ENCODE measurements at regions of chr6 and their contacts with region 1.

Region 1: DNA sequence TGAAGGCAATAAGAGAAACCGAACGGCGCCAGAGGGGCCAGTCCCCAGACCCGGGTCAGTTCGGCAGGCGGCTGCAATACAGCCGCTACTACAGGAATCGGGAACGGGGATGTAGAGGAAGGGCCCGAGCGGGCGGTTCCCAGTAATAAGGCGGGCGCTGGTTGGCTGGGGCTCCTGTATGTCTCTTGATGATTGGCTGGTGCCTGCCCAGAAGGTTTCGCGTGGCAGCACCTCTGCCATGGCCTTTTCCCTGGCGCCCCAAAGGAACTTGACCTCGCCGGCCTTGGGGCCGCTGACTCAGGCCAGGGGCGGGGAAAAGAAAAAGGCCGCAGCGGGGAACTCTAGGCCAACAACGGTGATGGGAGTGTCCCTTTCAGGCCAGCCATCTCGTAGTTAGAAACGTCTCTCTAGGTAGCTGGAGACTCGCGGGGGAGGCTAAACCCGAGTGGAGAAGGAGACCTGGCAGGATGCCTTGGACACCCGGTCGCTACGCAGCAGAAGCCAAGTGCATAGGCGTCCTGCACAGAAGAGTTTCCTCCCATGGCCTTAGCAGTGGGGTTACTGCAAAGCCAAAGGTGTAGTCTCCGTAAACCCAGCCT is at the start of gene IBTK:
- DNase-seq: peak; percentile 88
- ATAC-seq: peak; percentile 70
- H3K4me3 ChIP-seq: peak within 1 kb of the TSS; percentile 84
- H3K27ac ChIP-seq: peak within 1 kb of the TSS; percentile 100
- H3K4me1 ChIP-seq: peaks cover 38% of the 10 kb centered on the region
- H3K27me3 ChIP-seq: no peaks in the 10 kb centered on the region
- CTCF ChIP-seq: no peak
- total RNA-seq, gene IBTK: 17.2 and 20.0 TPM in 2 replicates

Region 2: DNA sequence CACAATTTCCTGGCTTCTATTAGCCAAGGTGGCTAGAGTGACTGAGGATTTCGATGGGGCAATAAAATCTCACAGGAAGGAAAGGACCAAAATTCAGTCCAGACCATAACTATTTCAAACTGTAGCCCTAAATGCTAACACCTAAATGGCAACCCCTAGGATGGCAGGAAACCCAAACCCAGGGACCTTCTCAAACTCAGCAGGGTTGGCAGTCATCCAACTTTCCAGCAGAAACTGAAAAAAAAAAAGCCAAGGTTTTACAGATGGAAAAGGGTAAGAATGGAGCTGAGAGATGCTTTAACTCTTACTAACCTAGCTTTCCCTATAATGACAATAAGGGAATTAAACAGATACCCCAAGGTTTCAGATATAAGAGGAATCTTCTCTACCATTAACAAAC is 10.7 kb before region 1 on chr6:
- CTCF ChIA-PET with region 1: no interaction called
- POLR2A ChIA-PET with region 1: interaction called, 10 read pairs
- intact Hi-C with region 1: no loop called
- DNase-seq: no peak
- ATAC-seq: no peak
- H3K4me3 ChIP-seq: no peak overlapping the region
- H3K27ac ChIP-seq: no peak overlapping the region
- H3K4me1 ChIP-seq: no peaks in the 10 kb centered on the region
- H3K27me3 ChIP-seq: no peaks in the 10 kb centered on the region
- CTCF ChIP-seq: no peak

Region 3: GRCh38 chr6:82541306-82541705 is 293.6 kb after region 1 on chr6:
- CTCF ChIA-PET with region 1: no interaction called
- POLR2A ChIA-PET with region 1: no interaction called
- intact Hi-C with region 1: loop called (anchors 5 kb)
- DNase-seq: no peak
- ATAC-seq: no peak
- H3K4me3 ChIP-seq: no peak overlapping the region
- H3K27ac ChIP-seq: no peak overlapping the region
- H3K4me1 ChIP-seq: 0 out of 2 replicates have a peak, but pooled peaks cover 5% of the 10 kb centered on the region
- H3K27me3 ChIP-seq: no peaks in the 10 kb centered on the region
- CTCF ChIP-seq: no peak

Region 4: DNA sequence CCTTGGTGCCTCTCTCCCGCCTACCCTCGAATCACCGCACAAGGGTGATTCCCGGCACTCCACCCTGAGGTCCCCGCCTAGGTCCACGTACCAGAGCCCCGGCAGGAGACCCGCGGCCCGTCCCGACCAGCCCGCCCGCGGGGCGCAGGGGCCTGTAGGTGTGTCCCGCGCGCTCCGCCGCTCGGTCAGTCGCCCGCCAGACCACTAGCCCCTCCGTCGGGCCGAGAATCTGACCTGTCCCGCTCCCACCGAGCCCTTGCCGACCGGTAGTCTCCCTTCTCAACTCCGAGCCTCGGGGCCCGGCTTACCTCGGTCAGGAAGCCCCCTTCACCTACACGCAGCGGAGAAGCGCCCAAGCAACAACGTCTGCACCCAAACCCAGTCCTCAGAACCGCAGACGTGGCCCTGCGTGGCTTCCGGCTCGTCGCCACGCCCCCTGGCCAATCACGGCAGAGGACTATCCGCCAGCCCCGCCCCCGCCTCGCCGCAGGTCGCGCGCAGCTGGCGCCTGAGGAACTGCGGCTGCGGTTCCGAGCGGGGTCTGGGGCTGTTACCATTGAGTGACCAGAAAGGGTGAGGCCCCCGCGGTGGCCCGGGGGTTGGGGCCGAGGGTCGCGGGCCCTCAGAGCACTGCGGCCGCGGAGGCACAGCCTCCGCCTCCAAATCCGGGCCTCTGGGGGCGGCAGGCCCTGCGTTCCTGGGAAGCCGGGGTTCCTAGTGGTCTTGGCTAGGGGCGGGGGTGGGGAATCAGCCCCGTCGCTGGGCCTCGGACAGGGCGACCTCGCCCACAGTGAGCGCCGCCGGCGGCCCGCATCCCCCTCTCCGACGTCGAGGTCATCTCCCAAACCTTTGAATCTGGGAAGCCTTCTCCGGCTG is 945.4 kb after region 1 on chr6 and contains the starts of genes PGM3 and RWDD2A:
- CTCF ChIA-PET with region 1: no interaction called
- POLR2A ChIA-PET with region 1: no interaction called
- intact Hi-C with region 1: loop called (anchors 10 kb)
- DNase-seq: peak; percentile 80
- ATAC-seq: peak; percentile 83
- H3K4me3 ChIP-seq: peak within 1 kb of the TSS; percentile 86
- H3K27ac ChIP-seq: peak within 1 kb of the TSS; percentile 42
- H3K4me1 ChIP-seq: peaks cover 18% of the 10 kb centered on the region
- H3K27me3 ChIP-seq: no peaks in the 10 kb centered on the region
- CTCF ChIP-seq: no peak
- total RNA-seq, gene PGM3: 17.0 and 25.2 TPM in 2 replicates
- total RNA-seq, gene RWDD2A: 0.63 and 1.3 TPM in 2 replicates